ENCODE measurements at regions of chr3 and their contacts with region 1.

Region 1: DNA sequence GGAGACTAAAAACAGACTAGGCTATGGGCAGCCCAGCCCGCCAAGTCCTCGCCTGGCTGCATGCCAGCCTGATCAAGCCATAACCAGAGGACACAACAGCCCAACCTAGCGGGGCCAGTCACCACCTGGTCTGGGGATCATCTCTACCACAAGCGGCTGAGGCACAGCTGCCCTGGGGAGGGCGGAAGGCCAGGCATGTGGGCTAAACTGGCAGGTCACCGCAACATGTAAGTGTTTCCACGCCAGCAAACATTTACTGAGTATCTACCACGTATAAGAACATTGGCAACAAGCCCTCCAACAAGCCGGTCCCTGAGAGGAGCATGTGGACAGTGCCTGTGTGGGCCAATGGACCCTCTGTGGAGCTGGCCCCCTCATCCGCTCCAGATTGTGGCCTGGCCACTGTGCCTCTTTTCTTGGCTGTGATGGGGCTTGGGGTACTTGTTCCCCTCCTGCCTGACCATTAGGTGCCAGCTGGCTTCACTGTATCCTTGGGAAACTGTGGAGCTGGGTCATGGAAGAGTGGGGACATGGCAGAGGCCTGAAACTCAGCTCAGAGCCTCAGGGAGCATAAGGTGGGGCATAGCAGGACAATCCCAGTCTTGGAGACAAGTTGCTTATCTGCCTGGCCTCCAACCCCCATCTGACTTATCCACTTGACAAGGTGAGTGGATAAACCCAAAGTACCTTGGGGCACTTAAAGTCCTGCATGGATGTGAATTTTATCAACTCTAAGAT is 9.0 kb downstream of the UBXN7 start:
- DNase-seq: peak in 1 of 2 donors; percentile 45
- H3K4me3 ChIP-seq: no peak overlapping the region
- H3K27ac ChIP-seq: peak overlapping the region in 1 of 2 donors; percentile 19
- H3K4me1 ChIP-seq: peaks cover 0 to 18% (median 11%) of the 10 kb centered on the region in 4 donors
- H3K27me3 ChIP-seq: no peaks in the 10 kb centered on the region
- CTCF ChIP-seq: no peak

Region 2: GRCh38 chr3:195558602-195559001 is 864.6 kb before region 1 on chr3:
- intact Hi-C with region 1: loop called (anchors 10 kb)
- DNase-seq: no peak
- H3K4me3 ChIP-seq: no peak overlapping the region
- H3K27ac ChIP-seq: no peak overlapping the region
- H3K4me1 ChIP-seq: no peaks in the 10 kb centered on the region
- H3K27me3 ChIP-seq: no peaks in the 10 kb centered on the region
- CTCF ChIP-seq: no peak

Region 3: GRCh38 chr3:196365736-196366135 is 57.5 kb before region 1 on chr3:
- intact Hi-C with region 1: no loop called
- DNase-seq: no peak
- H3K4me3 ChIP-seq: no peak overlapping the region
- H3K27ac ChIP-seq: no peak overlapping the region
- H3K4me1 ChIP-seq: no peaks in the 10 kb centered on the region
- H3K27me3 ChIP-seq: no peaks in the 10 kb centered on the region
- CTCF ChIP-seq: no peak